ENCODE measurements at regions of chr12 and their contacts with region 1.

Region 1: GRCh38 chr12:24838531-24838950 is 110.4 kb downstream of the BCAT1 start:
- DNase-seq: peak; percentile 88
- H3K4me3 ChIP-seq: no peak overlapping the region
- CTCF ChIP-seq: no peak

Region 2: DNA sequence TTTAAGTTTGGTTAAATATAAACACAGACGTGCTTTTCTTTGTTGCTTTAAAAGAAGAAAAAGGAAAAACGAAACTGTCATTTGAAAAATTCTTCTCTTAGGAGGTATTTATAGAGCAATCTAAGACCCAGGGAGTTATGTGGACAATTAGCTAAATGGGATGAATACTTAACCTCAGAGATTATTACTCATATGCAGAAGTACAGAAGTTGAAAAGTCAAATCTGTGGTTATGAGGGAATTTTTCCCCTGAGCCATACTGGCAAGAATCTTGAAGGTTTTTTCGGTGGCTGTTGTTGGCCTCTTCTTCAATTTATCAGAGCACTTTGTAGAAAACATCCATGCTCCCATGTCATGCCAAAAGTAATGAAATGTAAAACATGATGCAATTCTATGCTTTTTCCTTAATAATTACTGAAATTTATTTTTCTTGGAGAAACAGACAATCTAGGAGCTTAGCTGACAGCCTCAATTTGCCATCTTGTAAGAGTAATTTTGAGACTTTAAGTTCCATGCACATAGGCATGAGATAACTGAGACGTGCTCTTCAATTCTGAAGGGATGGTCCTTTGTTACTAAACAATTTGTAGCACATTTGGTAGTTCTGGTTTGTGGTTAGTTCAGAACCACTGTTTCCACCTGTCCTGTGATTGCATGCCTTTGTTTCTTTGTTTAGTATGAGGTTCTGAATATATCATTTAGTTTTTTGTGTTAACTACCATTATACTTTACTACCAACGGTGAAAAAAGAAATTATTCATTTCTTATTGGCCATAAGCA is 16.2 kb before region 1 on chr12:
- CTCF ChIA-PET with region 1: no interaction called
- POLR2A ChIA-PET with region 1: no interaction called
- DNase-seq: peak; percentile 66
- H3K4me3 ChIP-seq: no peak overlapping the region
- CTCF ChIP-seq: no peak

Region 3: GRCh38 chr12:24852420-24852819 is 13.9 kb after region 1 on chr12:
- CTCF ChIA-PET with region 1: interaction called, 25 read pairs
- POLR2A ChIA-PET with region 1: no interaction called
- DNase-seq: no peak
- H3K4me3 ChIP-seq: no peak overlapping the region
- CTCF ChIP-seq: no peak

Region 4: DNA sequence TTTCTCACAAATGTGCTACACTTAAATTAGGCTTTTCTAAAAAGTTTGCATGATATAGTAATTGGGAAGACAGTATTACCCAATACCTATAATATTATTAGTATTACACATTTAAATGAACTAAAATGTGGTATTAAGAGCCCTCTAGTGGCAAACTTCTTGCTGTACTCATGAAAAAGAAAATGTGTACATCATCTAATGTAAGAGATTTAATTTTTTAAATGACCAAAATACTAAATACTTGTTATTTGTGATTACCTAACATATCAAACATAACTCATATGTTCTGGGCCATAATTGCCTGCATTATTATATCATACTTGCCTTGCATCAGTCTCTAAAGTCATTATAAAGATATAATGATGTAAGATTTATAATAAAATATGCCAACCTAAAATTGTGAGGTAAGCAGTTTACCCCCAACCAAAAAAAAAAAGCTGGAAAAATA is 292.2 kb after region 1 on chr12:
- CTCF ChIA-PET with region 1: no interaction called
- POLR2A ChIA-PET with region 1: no interaction called
- DNase-seq: peak; percentile 14
- H3K4me3 ChIP-seq: no peak overlapping the region
- CTCF ChIP-seq: peak; percentile 5

Measured in AG04449 (cell line).